Caco-2 (cell line): ENCODE measurements at regions of chr1 and their contacts with region 1.

Region 1: GRCh38 chr1:247373721-247374141 is 42.1 kb upstream of the ZNF496 start:
- DNase-seq: peak in 1 of 2 experiments; percentile 12
- H3K4me3 ChIP-seq: no peak overlapping the region
- H3K4me3 Mint-ChIP-seq: no peak overlapping the region
- H3K27ac Mint-ChIP-seq: no peak overlapping the region
- H3K4me1 ChIP-seq: no peaks in the 10 kb centered on the region
- H3K4me1 Mint-ChIP-seq: no peaks in the 10 kb centered on the region
- H3K27me3 ChIP-seq: no peaks in the 10 kb centered on the region
- H3K27me3 Mint-ChIP-seq: no peaks in the 10 kb centered on the region
- CTCF ChIP-seq: no peak

Region 2: GRCh38 chr1:247165674-247166073 is 208.1 kb before region 1 on chr1:
- CTCF ChIA-PET with region 1: no interaction called
- POLR2A ChIA-PET with region 1: no interaction called
- intact Hi-C with region 1: no loop called
- DNase-seq: no peak
- H3K4me3 ChIP-seq: no peak overlapping the region
- H3K4me3 Mint-ChIP-seq: no peak overlapping the region
- H3K27ac Mint-ChIP-seq: no peak overlapping the region
- H3K4me1 ChIP-seq: no peaks in the 10 kb centered on the region
- H3K4me1 Mint-ChIP-seq: peaks cover 6% of the 10 kb centered on the region
- H3K27me3 ChIP-seq: no peaks in the 10 kb centered on the region
- H3K27me3 Mint-ChIP-seq: no peaks in the 10 kb centered on the region
- CTCF ChIP-seq: no peak

Region 3: DNA sequence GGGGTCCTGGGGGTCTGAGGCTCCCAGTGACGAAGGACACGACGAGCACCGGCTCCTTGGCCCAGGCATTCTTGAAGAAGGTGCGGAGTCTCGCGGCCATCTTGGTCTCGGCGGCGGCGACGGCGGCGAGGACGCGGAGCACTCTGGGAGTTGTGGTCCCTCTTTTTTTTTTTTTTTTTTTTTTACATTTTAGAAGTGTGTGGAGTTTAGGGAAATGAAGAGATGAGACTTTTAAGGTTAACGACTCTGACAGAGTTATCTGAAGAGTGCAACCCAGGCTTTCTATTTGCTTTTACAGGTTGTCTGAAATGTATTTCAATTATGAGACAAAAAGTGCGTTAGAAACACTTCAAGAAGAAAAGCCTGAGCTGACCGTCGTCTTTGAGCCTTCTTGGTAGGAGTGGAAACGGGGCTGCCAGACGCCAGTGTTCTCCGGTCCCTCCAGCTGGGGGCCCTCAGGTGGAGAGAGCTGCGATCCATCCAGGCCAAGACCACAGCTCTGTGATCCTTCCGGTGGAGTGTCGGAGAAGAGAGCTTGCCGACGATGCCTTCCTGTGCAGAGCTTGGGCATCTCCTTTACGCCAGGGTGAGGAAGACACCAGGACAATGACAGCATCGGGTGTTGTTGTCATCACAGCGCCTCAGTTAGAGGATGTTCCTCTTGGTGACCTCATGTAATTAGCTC is 74.5 kb after region 1 on chr1:
- CTCF ChIA-PET with region 1: interaction called, 4 read pairs
- POLR2A ChIA-PET with region 1: no interaction called
- intact Hi-C with region 1: loop called (anchors 5 kb)
- DNase-seq: peak; percentile 73 to 80
- H3K4me3 ChIP-seq: peak overlapping the region; percentile 43
- H3K4me3 Mint-ChIP-seq: peak overlapping the region; percentile 72
- H3K27ac Mint-ChIP-seq: peak overlapping the region; percentile 74
- H3K4me1 ChIP-seq: no peaks in the 10 kb centered on the region
- H3K4me1 Mint-ChIP-seq: no peaks in the 10 kb centered on the region
- H3K27me3 ChIP-seq: no peaks in the 10 kb centered on the region
- H3K27me3 Mint-ChIP-seq: peaks cover 18% of the 10 kb centered on the region
- CTCF ChIP-seq: no peak

Region 4: DNA sequence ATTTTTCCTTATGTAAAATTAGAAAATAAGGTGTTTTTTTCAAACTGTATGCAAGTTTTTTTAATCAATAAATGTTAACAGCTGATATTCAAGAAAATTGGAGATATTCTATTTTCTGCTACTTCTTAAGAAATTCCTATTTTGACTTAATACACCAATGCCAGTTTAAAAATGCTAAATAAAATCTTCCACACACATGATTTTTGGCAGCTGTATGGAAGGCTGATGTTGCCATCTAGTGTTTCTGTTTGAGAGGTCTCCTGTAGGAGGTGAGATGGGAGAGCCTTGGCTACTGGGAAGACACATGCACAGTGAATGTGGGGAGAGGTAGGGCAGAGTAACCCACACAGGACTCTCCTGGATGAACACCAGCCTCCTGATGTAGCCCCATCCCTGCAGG is 113.3 kb after region 1 on chr1:
- CTCF ChIA-PET with region 1: interaction called, 8 read pairs
- POLR2A ChIA-PET with region 1: no interaction called
- intact Hi-C with region 1: loop called (anchors 1 kb)
- DNase-seq: peak in 1 of 2 experiments; percentile 35
- H3K4me3 ChIP-seq: no peak overlapping the region
- H3K4me3 Mint-ChIP-seq: no peak overlapping the region
- H3K27ac Mint-ChIP-seq: no peak overlapping the region
- H3K4me1 ChIP-seq: no peaks in the 10 kb centered on the region
- H3K4me1 Mint-ChIP-seq: no peaks in the 10 kb centered on the region
- H3K27me3 ChIP-seq: no peaks in the 10 kb centered on the region; the same call in 1 of the 2 replicates
- H3K27me3 Mint-ChIP-seq: peaks cover 18% of the 10 kb centered on the region
- CTCF ChIP-seq: peak; percentile 37 to 40

Region 5: DNA sequence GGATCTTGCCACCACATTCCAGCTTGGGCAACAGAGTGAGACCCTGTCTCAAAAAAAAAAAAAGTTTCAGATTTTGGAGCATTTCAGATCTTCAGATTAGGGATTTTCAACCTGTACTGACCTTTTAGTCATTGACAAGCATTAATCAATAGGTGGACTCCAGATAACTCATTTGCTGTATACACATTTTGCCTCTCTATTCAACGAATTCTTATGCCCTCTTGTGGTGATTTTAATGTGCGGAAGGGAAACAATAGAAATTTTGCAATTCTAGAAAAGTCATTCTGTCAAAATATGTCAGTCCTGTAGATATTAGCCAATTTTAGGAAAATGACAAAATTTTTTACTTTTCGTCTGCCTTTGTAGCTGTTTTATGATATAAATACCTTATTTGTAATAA is 202.8 kb after region 1 on chr1:
- CTCF ChIA-PET with region 1: no interaction called
- POLR2A ChIA-PET with region 1: no interaction called
- intact Hi-C with region 1: loop called (anchors 1 kb)
- DNase-seq: peak in 1 of 2 experiments; percentile 12
- H3K4me3 ChIP-seq: no peak overlapping the region
- H3K4me3 Mint-ChIP-seq: no peak overlapping the region
- H3K27ac Mint-ChIP-seq: no peak overlapping the region
- H3K4me1 ChIP-seq: no peaks in the 10 kb centered on the region
- H3K4me1 Mint-ChIP-seq: no peaks in the 10 kb centered on the region
- H3K27me3 ChIP-seq: no peaks in the 10 kb centered on the region
- H3K27me3 Mint-ChIP-seq: peaks cover 2% of the 10 kb centered on the region
- CTCF ChIP-seq: peak; percentile 47 to 66